ENCODE measurements at regions of chr3 and their contacts with region 1.

Region 1: DNA sequence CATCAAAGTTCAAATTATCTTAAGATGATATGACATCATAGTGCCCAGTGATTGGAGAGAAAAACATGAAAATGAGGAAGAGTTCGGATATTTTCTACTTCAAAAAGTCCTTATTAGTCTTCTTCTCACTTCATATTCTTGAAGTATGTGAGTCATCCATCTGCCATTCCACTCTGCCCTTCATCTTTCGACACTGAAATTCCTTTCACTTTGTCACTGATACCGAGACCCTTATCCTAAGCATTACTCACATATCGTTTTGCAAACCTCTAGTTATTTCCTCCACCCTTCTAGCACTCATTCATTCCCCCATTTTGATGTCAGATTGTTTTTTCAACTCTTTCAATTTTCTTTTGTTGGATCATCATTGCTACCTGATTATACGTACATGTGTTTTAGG is 4.0 kb downstream of the OR5H14 start:
- DNase-seq: no peak
- ATAC-seq: no peak
- H3K4me3 ChIP-seq: no peak overlapping the region
- H3K27ac ChIP-seq: no peak overlapping the region
- H3K4me1 ChIP-seq: no peaks in the 10 kb centered on the region
- H3K27me3 ChIP-seq: no peaks in the 10 kb centered on the region
- CTCF ChIP-seq: no peak
- POLR2A ChIP-seq: no peak
- RAD21 ChIP-seq: no peak

Region 2: DNA sequence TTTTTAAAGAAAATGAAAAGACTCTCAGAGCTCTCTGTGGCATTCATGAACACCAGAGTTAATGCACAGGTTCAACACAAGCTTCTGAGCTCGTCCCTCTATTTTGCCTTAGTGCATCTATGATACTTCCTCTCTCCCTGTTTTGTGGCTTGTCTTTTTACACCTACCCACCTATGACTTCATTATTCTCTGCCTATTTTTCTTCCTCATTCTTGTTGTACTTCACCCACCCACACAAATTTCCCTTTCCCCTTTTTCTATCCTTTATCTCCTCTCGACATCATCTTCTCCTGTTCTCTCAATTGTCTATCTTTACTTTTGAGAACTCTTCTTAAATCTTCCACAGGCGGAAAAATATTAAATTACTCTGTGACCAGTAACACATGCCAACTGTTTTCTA is 63.8 kb after region 1 on chr3:
- CTCF ChIA-PET with region 1: no interaction called
- POLR2A ChIA-PET with region 1: no interaction called
- dilution Hi-C with region 1: no loop called
- in situ Hi-C with region 1: loop called (anchors 10 kb)
- intact Hi-C with region 1: no loop called
- DNase-seq: no peak
- ATAC-seq: no peak
- H3K4me3 ChIP-seq: no peak overlapping the region
- H3K27ac ChIP-seq: no peak overlapping the region
- H3K4me1 ChIP-seq: no peaks in the 10 kb centered on the region
- H3K27me3 ChIP-seq: no peaks in the 10 kb centered on the region
- CTCF ChIP-seq: no peak
- POLR2A ChIP-seq: no peak
- RAD21 ChIP-seq: no peak

Region 3: GRCh38 chr3:98282205-98282604 is 131.0 kb after region 1 on chr3 and contains the start of gene OR5H2:
- CTCF ChIA-PET with region 1: no interaction called
- POLR2A ChIA-PET with region 1: no interaction called
- dilution Hi-C with region 1: no loop called
- in situ Hi-C with region 1: no loop called
- intact Hi-C with region 1: no loop called
- DNase-seq: no peak
- ATAC-seq: no peak
- H3K4me3 ChIP-seq: no peak within 1 kb of the TSS
- H3K27ac ChIP-seq: no peak within 1 kb of the TSS
- H3K4me1 ChIP-seq: no peaks in the 10 kb centered on the region
- H3K27me3 ChIP-seq: no peaks in the 10 kb centered on the region
- CTCF ChIP-seq: no peak
- POLR2A ChIP-seq: no peak
- RAD21 ChIP-seq: no peak
- total RNA-seq, gene OR5H2: not detected in 2 replicates